Right lobe of liver (tissue), 6 donors: ENCODE measurements at regions of chr6 and their contacts with region 1.

Region 1: DNA sequence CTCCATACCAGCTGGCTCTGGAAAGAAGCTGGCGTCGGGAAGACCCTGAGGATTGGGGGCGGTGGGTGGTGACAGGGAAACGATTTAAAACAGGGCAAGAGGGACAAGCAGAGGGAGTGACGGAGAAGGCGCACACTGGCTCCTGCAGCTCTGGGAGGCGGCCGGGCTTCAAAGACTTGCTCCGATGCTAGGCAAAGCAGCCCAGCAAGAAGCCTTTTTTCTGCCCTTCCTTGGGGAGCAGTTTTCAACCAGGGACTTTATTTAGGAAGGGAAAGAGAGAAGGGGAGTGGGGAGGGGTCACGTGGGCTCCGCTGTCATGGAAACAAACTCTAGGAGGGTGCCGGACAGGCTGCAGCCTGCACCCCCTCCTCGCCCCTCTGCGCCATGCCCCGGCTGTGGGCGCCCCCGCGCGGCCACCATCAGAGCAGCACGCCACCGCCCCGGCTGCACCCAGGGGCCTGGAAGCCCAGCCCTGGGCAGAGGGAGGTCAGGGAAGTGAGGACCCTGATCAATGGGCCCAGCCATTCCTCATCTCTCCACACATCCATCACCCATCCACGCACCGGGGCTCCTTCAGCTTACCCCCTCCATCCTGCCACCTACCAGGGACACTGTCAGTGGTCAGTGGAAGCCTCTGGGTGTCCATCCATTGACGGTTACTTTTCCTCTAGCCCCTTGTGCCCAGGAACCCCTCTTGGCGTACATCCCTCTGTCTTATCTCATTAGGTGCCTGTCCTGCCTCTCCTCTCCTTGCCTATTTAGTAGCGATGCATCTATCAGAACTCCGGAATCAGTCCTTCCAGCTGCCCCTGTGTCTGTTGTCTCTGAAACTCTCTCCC is 66.6 kb upstream of the CCDC167 start:
- DNase-seq: peak; percentile 53 to 64 (median 61)
- ATAC-seq: peak; percentile 89 to 94 (median 90)
- H3K4me3 ChIP-seq: no peak overlapping the region
- H3K27ac ChIP-seq: no peak overlapping the region
- H3K4me1 ChIP-seq: peaks cover 0 to 8% (median 0%) of the 10 kb centered on the region in 4 donors
- H3K27me3 ChIP-seq: peaks cover 0 to 4% of the 10 kb centered on the region in 2 donors
- CTCF ChIP-seq: peak; percentile 75 to 93 (median 92)
- POLR2A ChIP-seq: no peak

Region 2: GRCh38 chr6:37679539-37680476 is 113.5 kb after region 1 on chr6:
- intact Hi-C with region 1: loop called in 1 of 2 experiments (anchors 10 kb)
- DNase-seq: no peak
- ATAC-seq: no peak
- H3K4me3 ChIP-seq: no peak overlapping the region
- H3K27ac ChIP-seq: no peak overlapping the region
- H3K4me1 ChIP-seq: no peaks in the 10 kb centered on the region
- H3K27me3 ChIP-seq: no peaks in the 10 kb centered on the region
- CTCF ChIP-seq: no peak
- POLR2A ChIP-seq: no peak

Region 3: GRCh38 chr6:38262026-38262425 is 695.7 kb after region 1 on chr6:
- intact Hi-C with region 1: no loop called
- DNase-seq: no peak
- ATAC-seq: peak in 2 of 4 donors; percentile 30 to 87
- H3K4me3 ChIP-seq: no peak overlapping the region
- H3K27ac ChIP-seq: no peak overlapping the region
- H3K4me1 ChIP-seq: no peaks in the 10 kb centered on the region
- H3K27me3 ChIP-seq: no peaks in the 10 kb centered on the region
- CTCF ChIP-seq: no peak
- POLR2A ChIP-seq: no peak